Right lobe of liver (tissue), 6 donors: ENCODE measurements at regions of chr6 and their contacts with region 1.

Region 1: DNA sequence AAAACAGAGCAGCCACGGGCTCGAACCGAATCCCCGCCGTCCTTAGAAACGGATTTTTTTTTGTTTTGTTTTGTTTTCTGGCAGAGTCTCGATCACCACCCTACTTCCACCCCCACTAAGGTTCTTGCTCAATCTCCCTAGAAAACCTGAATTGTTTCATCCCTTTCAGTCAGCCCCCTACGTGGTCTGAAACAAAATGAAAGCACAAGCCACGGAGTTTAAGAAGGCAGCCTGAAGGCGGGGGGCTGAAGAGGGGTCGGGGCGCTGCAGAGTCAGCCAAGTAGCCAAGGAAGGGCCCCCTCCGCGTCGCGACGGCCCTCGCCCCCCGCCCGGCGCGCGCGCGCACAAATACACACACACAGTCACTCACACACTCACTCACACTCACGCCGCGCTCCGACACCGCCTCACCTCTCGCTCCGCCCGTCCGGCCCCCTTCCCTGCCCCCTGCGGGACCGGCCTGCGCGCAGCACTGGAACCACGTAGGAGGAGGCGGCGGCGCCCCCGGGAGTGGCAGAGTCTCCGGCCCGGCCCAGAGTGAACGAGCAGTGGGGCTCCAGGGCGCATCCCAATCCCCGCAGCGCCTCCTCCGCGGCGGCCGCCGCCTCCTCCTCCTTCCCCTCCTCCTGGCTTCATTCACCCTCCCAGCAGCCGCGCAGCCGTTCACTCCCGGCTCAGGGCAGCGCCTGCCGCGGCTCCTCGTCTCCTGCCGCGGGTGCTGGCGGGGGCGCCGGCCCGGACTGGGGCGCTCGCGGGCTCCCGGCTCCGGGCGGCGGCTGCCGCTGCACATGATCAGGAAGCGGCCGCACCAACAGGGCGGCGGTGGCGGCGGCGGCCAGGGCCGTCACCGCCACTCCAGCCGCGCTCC is 1.4 kb downstream of the ATXN1 start:
- DNase-seq: peak; percentile 95 to 97 (median 96)
- ATAC-seq: peak; percentile 65 to 87 (median 74)
- H3K4me3 ChIP-seq: peak overlapping the region; percentile 66 to 79 (median 74)
- H3K27ac ChIP-seq: peak overlapping the region; percentile 91 to 98 (median 96)
- H3K4me1 ChIP-seq: peaks cover 0 to 35% (median 5%) of the 10 kb centered on the region in 4 donors
- H3K27me3 ChIP-seq: no peaks in the 10 kb centered on the region
- CTCF ChIP-seq: peak in 3 of 4 donors; percentile 5 to 26 (median 11)
- POLR2A ChIP-seq: peak; percentile 96

Region 2: GRCh38 chr6:16585805-16586204 is 174.1 kb before region 1 on chr6:
- intact Hi-C with region 1: loop called in 1 of 2 experiments (anchors 10 kb)
- DNase-seq: no peak
- ATAC-seq: peak; percentile 46 to 58 (median 54)
- H3K4me3 ChIP-seq: peak overlapping the region; percentile 37 to 57 (median 55)
- H3K27ac ChIP-seq: peak overlapping the region; percentile 75 to 93 (median 87)
- H3K4me1 ChIP-seq: peaks cover 0 to 20% (median 6%) of the 10 kb centered on the region in 4 donors
- H3K27me3 ChIP-seq: no peaks in the 10 kb centered on the region
- CTCF ChIP-seq: no peak
- POLR2A ChIP-seq: no peak

Region 3: DNA sequence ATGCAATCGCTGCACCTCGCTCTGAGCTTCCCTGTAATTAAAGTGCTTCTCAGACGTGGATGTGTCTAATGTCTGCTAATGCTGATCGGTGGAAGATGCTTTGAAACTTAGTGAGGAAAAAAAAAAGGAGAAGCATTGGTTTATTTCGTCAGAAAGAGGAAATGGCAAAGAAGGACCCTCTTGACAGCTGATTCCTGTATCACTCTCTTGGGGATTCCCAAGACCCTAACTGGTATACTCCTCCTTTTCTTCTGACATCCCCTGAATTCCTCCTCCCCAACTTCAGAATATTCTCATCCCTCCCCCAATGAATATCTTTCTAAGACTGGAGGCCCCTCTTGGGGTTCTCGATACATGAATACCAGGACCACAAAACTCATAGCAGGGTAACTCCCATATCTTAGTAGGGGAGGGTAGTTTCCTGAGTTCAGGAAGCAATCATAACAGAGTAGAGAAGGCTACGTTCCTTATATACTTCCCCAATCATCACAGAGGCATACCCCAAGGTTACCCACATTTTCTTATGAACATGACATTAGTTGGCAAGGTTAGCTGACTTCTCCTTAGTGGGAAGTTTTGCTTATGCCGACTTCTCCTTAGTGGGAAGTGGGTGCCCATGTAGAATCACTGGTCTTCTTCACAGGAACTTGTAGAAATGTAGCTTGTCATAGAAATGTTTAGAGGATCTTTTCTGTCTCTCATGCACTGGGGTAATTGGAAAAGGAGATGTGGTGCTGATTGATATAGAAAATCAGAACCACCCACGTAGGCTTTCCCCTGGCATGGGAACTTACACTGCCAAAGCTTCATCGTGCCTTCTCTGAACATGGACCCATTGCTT is 65.2 kb after region 1 on chr6:
- intact Hi-C with region 1: no loop called
- DNase-seq: no peak
- ATAC-seq: no peak
- H3K4me3 ChIP-seq: no peak overlapping the region
- H3K27ac ChIP-seq: no peak overlapping the region
- H3K4me1 ChIP-seq: peaks cover 0 to 38% (median 16%) of the 10 kb centered on the region in 4 donors
- H3K27me3 ChIP-seq: no peaks in the 10 kb centered on the region
- CTCF ChIP-seq: no peak
- POLR2A ChIP-seq: no peak